AG04450 (cell line): ENCODE measurements at regions of chr6 and their contacts with region 1.

Region 1: GRCh38 chr6:75208298-75209183 is 2.7 kb upstream of the COL12A1 start:
- DNase-seq: peak; percentile 64
- H3K4me3 ChIP-seq: peak overlapping the region; percentile 41; the same call in 1 of the 2 replicates
- H3K27ac ChIP-seq: peak overlapping the region; percentile 61
- H3K27me3 ChIP-seq: no peaks in the 10 kb centered on the region
- CTCF ChIP-seq: peak; percentile 94

Region 2: DNA sequence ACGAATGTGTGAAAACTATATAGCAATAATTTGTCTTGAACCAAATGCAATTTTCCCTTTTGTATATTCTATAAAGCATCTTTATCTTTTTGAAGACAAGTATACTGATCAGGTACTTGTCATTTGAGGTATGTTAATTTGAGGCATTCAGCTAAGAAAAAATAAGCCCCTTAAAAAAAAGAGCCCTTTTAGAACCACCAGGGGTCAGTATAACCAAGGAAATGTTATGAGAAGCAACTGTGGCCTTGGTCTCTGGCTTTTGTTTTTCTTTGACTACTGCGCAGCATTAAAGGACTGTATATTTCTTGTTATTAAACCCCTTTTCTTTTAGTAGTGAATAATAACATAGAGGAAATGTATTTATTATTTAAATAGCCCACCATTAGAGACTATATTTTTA is 1469.4 kb before region 1 on chr6:
- CTCF ChIA-PET with region 1: interaction called, 139 read pairs
- POLR2A ChIA-PET with region 1: no interaction called
- DNase-seq: peak; percentile 54
- H3K4me3 ChIP-seq: no peak overlapping the region
- H3K27ac ChIP-seq: no peak overlapping the region
- H3K27me3 ChIP-seq: no peaks in the 10 kb centered on the region
- CTCF ChIP-seq: peak; percentile 73

Region 3: GRCh38 chr6:73969971-73970970 is 1238.3 kb before region 1 on chr6:
- CTCF ChIA-PET with region 1: interaction called, 62 read pairs
- POLR2A ChIA-PET with region 1: no interaction called
- DNase-seq: peak; percentile 13
- H3K4me3 ChIP-seq: no peak overlapping the region
- H3K27ac ChIP-seq: no peak overlapping the region
- H3K27me3 ChIP-seq: no peaks in the 10 kb centered on the region
- CTCF ChIP-seq: peak; percentile 80

Region 4: GRCh38 chr6:74409447-74409846 is 799.1 kb before region 1 on chr6:
- CTCF ChIA-PET with region 1: interaction called, 71 read pairs
- POLR2A ChIA-PET with region 1: no interaction called
- DNase-seq: peak; percentile 53
- H3K4me3 ChIP-seq: no peak overlapping the region
- H3K27ac ChIP-seq: no peak overlapping the region
- H3K27me3 ChIP-seq: no peaks in the 10 kb centered on the region
- CTCF ChIP-seq: peak; percentile 70

Region 5: DNA sequence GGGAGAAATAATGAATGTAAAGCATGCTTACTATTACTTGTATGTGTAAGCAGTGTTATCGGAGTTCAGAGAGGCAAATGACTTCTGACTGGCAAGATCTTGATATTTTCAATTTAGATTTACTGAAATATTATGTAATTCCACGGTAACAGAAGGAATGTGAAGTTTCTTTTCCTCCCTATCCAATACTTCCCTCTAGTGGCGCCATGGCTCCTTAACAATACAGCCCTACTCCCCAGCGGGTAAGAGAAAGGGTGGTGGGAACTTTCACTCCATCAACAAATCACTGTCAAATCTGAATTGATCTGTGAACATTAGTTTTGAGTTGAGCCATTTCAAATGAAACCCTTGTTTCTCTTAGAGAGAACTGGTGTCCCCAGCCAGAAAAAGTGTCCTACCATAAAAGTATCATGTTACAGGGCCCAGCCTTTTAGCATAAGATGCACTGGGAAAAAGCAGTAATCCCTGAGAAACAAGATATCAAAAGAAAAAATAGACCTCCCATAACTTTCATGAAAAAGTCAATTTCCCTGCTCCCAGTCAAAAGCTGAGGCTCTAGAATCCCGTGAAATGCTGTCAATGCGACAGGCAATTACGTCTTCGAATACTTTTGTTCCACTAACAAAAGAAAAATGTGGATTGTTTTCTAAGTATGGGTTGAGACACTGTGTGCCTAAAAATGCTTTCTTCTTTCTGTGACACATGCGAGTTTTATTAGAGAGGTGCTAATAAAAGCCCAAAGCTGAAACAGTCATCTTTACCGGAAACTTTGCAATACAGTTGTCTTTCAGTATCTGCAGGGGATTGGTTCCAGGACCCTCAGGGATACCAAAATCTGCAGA is 22.2 kb after region 1 on chr6:
- CTCF ChIA-PET with region 1: interaction called, 38 read pairs
- POLR2A ChIA-PET with region 1: interaction called, 9 read pairs
- DNase-seq: no peak
- H3K4me3 ChIP-seq: no peak overlapping the region
- H3K27ac ChIP-seq: no peak overlapping the region
- H3K27me3 ChIP-seq: no peaks in the 10 kb centered on the region
- CTCF ChIP-seq: peak; percentile 90